CD8-positive, alpha-beta memory T cell (primary cell): ENCODE measurements at regions of chr7 and their contacts with region 1.

Region 1: DNA sequence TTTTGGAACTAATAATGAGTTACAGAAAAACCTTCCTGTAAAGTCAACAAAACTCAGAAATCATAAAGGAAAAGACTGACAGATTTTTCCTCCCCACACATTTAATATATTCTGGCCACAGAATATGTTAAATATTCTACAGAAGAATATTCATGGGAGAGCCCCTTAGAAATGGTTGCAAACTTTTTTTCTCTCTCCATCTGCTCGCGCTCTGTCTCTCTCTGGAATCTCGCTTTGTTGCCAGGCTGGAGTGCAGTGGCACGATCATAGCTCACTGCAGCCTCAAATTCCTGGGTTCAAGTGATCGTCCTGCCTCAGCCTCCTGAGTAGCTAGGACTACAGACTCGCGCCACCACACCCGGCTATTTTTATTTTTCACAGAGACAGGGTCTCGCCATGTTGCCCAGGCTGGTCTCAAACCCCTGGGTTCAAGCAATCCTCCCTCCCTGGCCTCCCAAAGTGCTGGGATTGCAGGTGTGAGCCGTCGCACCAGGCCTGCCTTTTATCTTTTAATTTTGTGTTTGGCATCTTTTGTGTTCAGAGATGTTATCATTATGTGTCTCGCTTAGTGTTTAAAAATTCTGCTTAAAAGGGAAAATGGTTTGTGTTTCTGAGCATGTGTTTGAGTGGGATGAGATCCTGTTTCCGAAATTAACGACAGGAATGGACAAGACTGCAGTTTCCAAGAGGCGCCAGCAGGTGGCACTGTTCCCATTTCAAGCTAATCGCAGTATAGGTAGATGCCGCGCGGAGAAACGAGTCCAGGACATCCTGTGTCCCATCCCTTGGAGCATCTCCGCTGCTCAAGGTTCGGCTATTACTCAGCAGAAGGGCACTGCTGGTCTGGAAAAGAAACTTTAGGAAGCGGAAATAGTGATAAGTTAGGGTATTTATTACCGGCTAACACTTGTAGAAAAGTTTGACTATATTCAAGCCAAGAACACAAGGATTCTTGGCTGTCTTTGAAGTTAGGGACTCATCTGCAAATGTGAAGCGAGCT is 23.1 kb upstream of the ST7 start:
- DNase-seq: peak; percentile 57 to 85 (median 67)
- H3K4me3 ChIP-seq: no peak overlapping the region
- H3K4me3 Mint-ChIP-seq: peak overlapping the region in 1 of 7 donors; percentile 16
- H3K27ac ChIP-seq: no peak overlapping the region
- H3K27ac Mint-ChIP-seq: no peak overlapping the region
- H3K4me1 ChIP-seq: no peaks in the 10 kb centered on the region
- H3K4me1 Mint-ChIP-seq: peaks cover 6 to 9% (median 8%) of the 10 kb centered on the region in 3 donors
- H3K27me3 ChIP-seq: no peaks in the 10 kb centered on the region
- H3K27me3 Mint-ChIP-seq: peaks cover 2 to 8% of the 10 kb centered on the region in 2 donors

Region 2: DNA sequence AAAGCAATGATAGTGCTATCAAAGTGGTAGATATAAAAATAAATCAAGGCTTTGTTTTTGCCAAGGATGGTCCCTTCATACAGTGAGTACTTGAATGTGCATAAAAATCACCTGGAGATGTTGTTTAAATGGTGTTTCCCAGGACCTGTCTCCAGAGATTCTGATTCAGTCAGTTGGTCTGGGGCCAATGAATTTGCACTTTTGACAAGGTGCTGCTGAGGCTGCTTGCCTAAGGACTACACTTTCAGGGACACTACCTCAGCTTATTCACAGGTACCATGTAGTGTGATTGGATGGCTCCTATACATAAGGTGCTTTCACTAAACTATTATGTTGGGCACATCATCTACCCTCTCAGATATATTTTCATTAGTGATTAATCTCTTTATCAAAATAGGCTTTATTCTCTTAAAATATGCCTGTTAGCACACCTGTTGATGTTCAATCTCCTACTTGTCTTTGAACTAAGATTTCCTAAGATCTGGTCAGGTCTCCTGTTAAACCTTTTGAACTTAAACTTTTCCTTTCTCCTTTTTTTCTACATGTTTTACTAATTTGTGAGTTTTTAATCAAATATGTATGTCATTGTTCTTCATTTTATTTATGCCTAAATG is 43.6 kb before region 1 on chr7:
- CTCF ChIA-PET with region 1: no interaction called
- POLR2A ChIA-PET with region 1: no interaction called
- DNase-seq: no peak
- H3K4me3 ChIP-seq: no peak overlapping the region
- H3K4me3 Mint-ChIP-seq: no peak overlapping the region
- H3K27ac ChIP-seq: no peak overlapping the region
- H3K27ac Mint-ChIP-seq: peak overlapping the region in 2 of 8 donors; percentile 42 to 74
- H3K4me1 ChIP-seq: peaks cover 14% of the 10 kb centered on the region
- H3K4me1 Mint-ChIP-seq: peaks cover 34 to 62% (median 56%) of the 10 kb centered on the region in 3 donors
- H3K27me3 ChIP-seq: no peaks in the 10 kb centered on the region
- H3K27me3 Mint-ChIP-seq: no peaks in the 10 kb centered on the region

Region 3: GRCh38 chr7:117127585-117128168 is 197.5 kb after region 1 on chr7:
- CTCF ChIA-PET with region 1: interaction called, 50 read pairs
- POLR2A ChIA-PET with region 1: no interaction called
- DNase-seq: peak; percentile 20 to 57 (median 26)
- H3K4me3 ChIP-seq: no peak overlapping the region
- H3K4me3 Mint-ChIP-seq: no peak overlapping the region
- H3K27ac ChIP-seq: no peak overlapping the region
- H3K27ac Mint-ChIP-seq: no peak overlapping the region
- H3K4me1 ChIP-seq: no peaks in the 10 kb centered on the region
- H3K4me1 Mint-ChIP-seq: peaks cover 0 to 6% (median 3%) of the 10 kb centered on the region in 3 donors
- H3K27me3 ChIP-seq: no peaks in the 10 kb centered on the region
- H3K27me3 Mint-ChIP-seq: no peaks in the 10 kb centered on the region